ENCODE measurements at regions of chr1 and their contacts with region 1.

Region 1: DNA sequence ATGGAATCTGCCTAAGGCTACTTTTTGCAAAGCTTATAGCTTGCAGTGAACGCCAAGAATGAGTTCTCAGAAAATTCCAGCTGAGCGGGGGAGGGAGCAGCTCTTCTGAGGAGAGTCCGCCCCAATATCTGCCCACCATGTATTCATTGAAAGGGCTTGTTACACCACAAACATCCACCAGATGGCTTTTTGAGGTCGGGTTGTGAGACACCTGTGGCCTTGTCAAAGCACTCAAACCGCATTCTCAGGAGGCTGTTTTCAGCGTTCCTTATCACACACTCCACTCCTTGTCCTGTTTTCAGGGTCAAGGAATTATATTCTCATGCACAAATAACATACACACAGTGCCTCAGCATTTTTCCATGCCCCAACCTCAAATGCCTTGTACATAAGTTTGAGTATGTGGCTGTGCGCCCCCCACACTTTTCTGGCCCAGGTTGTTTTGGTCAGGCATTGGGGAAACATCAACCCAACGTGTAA is 3.9 kb upstream of the C4BPB start:
- DNase-seq: peak in 5 of 10 donors; percentile 18 to 46 (median 35)
- H3K4me3 ChIP-seq: no peak overlapping the region
- H3K27ac ChIP-seq: no peak overlapping the region
- H3K27me3 ChIP-seq: no peaks in the 10 kb centered on the region
- CTCF ChIP-seq: peak; percentile 28 to 80 (median 63)

Region 2: DNA sequence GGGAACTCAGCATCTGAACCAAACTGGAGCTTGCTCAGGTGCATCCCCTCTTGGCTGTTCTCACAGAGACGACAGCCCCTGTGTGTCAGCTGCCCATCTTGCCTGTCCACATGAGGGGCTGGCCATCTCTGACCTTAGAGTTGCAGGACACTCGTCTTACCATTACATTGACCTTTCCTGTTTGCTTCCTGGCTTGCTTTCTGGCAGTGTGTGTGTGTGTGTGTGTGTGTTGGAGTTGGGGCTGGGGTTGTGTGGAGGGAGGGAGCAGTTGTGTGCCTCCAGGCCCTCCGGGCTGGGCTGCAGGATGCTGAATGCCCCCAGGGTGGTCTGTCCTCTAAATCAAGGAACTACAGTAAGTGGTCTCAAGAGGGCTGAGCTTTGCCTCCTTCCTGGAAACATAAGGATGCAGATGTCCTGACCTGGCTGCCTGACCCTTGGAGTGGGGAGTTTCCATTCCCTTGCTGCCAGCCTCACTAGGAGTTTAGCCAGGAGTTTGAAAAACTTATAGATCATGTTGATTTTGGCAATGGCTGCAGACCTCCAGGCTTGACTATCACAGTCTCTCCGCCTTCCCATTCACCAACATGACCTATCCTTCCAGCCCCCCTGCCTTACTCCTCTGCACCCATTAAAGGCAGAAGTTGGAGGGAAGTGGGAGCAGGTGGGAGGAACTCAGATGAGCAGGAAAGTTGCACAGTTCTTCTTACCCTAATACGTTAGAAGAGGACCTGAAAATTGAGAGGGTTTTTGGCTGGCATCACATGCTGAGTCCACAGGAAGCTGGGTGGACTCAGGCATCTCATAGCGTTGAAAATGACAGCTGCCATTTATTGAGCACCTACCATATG is 558.5 kb before region 1 on chr1:
- intact Hi-C with region 1: no loop called
- DNase-seq: peak in 1 of 10 donors; percentile 10
- H3K4me3 ChIP-seq: no peak overlapping the region
- H3K27ac ChIP-seq: no peak overlapping the region
- H3K27me3 ChIP-seq: no peaks in the 10 kb centered on the region
- CTCF ChIP-seq: no peak

Region 3: GRCh38 chr1:207321079-207321789 is 236.5 kb after region 1 on chr1 and contains the start of gene CD55:
- intact Hi-C with region 1: loop called in 1 of 2 experiments (anchors 2 kb)
- DNase-seq: peak; percentile 73 to 93 (median 88)
- H3K4me3 ChIP-seq: peak within 1 kb of the TSS; percentile 57 to 98 (median 88)
- H3K27ac ChIP-seq: peak within 1 kb of the TSS; percentile 35 to 98 (median 92)
- H3K27me3 ChIP-seq: no peaks in the 10 kb centered on the region
- CTCF ChIP-seq: peak in 27 of 56 donors; percentile 6 to 50 (median 17)
- total RNA-seq, gene CD55: 11.7 to 83.5 (median 35.7) TPM

Region 4: DNA sequence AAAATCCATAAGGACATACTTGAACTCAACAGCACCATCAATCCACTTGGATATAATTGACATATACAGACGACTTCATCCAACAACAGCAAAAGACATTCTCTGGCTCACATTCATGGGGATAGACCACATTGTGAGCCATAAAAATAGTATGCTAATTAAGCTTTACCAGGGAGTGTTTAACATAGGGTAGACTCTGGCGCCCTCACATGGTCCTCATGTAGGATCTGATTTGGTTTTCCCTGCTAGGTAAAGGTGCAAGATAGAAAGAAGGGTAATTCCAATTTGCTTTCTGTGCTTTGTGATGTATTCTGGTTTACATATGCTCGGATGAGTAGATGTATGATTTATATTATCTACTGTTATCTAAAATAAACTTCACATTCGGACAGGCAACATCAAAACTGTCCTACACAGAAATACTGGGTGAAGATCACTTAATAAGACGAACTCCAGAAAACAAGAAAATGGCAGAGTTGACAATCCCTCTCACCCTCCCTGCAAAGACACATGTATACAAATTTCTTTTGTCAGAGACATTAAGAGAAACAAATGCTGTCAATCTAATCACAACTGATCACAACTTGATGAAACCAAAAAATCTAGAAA is 587.9 kb after region 1 on chr1:
- intact Hi-C with region 1: loop called in 1 of 2 experiments (anchors 10 kb)
- DNase-seq: peak in 2 of 10 donors; percentile 46 to 61
- H3K4me3 ChIP-seq: no peak overlapping the region
- H3K27ac ChIP-seq: no peak overlapping the region
- H3K27me3 ChIP-seq: peaks cover 0 to 43% (median 23%) of the 10 kb centered on the region in 45 donors
- CTCF ChIP-seq: peak in 53 of 56 donors; percentile 8 to 82 (median 55)

Measured in dorsolateral prefrontal cortex (tissue), 120 donors.